A549 (cell line): ENCODE measurements at regions of chr10 and their contacts with region 1.

Region 1: GRCh38 chr10:4344511-4344994 is 481.5 kb upstream of the AKR1E2 start:
- DNase-seq: peak; percentile 69 to 92
- ATAC-seq: peak; percentile 99
- H3K4me3 ChIP-seq: 0 out of 3 replicates have a peak overlapping the region, but pooled peaks have one; percentile 14
- H3K27ac ChIP-seq: peak overlapping the region; percentile 80 to 88
- H3K4me1 ChIP-seq: peaks cover 23% of the 10 kb centered on the region
- CTCF ChIP-seq: no peak; the same call in 2 of the 3 replicates
- EP300 ChIP-seq: peak; percentile 64 to 82; a peak in 3 of 5 replicates
- POLR2A ChIP-seq: no peak
- RAD21 ChIP-seq: peak; percentile 30 to 73; a peak in 4 of 5 replicates

Region 2: DNA sequence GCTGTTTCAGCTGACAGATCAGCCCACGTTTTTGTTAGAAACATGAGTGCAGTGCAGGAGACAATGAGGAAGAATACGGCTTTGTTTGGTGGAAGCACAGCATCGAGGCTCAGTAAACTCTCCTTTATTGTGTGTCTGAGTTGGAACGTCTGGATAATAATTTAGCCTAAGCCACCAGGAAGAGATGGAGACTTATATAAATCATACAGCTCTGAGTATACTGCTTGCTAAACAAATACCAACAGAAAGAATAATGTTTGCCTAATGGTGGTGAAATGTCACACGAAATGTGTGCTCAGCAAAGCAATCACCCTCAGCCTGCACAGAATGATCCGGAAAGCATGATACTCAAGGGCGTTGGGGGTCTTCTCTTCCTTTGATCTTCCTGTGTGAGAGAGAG is 1943.1 kb before region 1 on chr10:
- CTCF ChIA-PET with region 1: no interaction called
- POLR2A ChIA-PET with region 1: interaction called, 12 read pairs
- DNase-seq: no peak
- ATAC-seq: no peak
- H3K4me3 ChIP-seq: no peak overlapping the region
- H3K27ac ChIP-seq: no peak overlapping the region
- H3K4me1 ChIP-seq: no peaks in the 10 kb centered on the region
- CTCF ChIP-seq: no peak
- EP300 ChIP-seq: no peak
- POLR2A ChIP-seq: no peak
- RAD21 ChIP-seq: no peak

Region 3: DNA sequence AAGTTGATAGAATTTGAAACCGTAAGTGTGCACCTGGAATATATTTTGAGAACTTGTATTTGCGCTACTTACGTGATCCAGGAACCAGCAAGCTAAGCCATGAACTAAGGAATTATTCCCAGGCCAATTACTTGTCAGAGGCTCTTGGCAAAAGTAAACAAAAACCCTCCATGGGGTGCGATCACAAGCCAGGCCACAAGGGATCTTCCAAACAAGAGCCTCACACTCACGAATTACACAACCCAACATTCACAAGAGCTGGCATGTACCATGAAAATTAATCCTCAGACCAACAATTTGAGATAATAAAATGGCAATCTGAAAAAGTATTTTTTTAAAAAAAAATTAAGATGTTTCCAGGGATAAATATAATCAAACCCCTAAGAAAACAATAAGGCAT is 14.4 kb after region 1 on chr10:
- CTCF ChIA-PET with region 1: no interaction called
- POLR2A ChIA-PET with region 1: no interaction called
- DNase-seq: peak in 1 of 2 experiments; percentile 35
- ATAC-seq: no peak
- H3K4me3 ChIP-seq: no peak overlapping the region
- H3K27ac ChIP-seq: no peak overlapping the region
- H3K4me1 ChIP-seq: peaks cover 19% of the 10 kb centered on the region
- CTCF ChIP-seq: no peak
- EP300 ChIP-seq: no peak
- POLR2A ChIP-seq: no peak
- RAD21 ChIP-seq: no peak